ENCODE measurements at regions of chr20 and their contacts with region 1.

Region 1: GRCh38 chr20:44080646-44081267 is 106.2 kb downstream of the JPH2 start:
- DNase-seq: peak; percentile 53 to 72
- ATAC-seq: peak; percentile 73 to 81 (median 76)
- H3K4me3 ChIP-seq: no peak overlapping the region
- H3K27ac ChIP-seq: no peak overlapping the region
- H3K4me1 ChIP-seq: peaks cover 15% of the 10 kb centered on the region
- H3K27me3 ChIP-seq: no peaks in the 10 kb centered on the region
- CTCF ChIP-seq: peak; percentile 98

Region 2: GRCh38 chr20:43448748-43449535 is 631.8 kb before region 1 on chr20:
- intact Hi-C with region 1: loop called (anchors 5 to 10 kb)
- DNase-seq: no peak
- ATAC-seq: peak; percentile 48 to 81 (median 52)
- H3K4me3 ChIP-seq: no peak overlapping the region
- H3K27ac ChIP-seq: no peak overlapping the region
- H3K4me1 ChIP-seq: peaks cover 4% of the 10 kb centered on the region
- H3K27me3 ChIP-seq: peaks cover 0 to 5% (median 0%) of the 10 kb centered on the region in 3 donors
- CTCF ChIP-seq: peak; percentile 62

Region 3: GRCh38 chr20:43456809-43457639 is 623.7 kb before region 1 on chr20:
- intact Hi-C with region 1: loop called in 1 of 2 experiments (anchors 10 kb)
- DNase-seq: peak; percentile 85 to 91
- ATAC-seq: peak; percentile 84 to 92 (median 87)
- H3K4me3 ChIP-seq: peak overlapping the region; percentile 82
- H3K27ac ChIP-seq: peak overlapping the region; percentile 98
- H3K4me1 ChIP-seq: peaks cover 10% of the 10 kb centered on the region
- H3K27me3 ChIP-seq: no peaks in the 10 kb centered on the region
- CTCF ChIP-seq: no peak

Region 4: DNA sequence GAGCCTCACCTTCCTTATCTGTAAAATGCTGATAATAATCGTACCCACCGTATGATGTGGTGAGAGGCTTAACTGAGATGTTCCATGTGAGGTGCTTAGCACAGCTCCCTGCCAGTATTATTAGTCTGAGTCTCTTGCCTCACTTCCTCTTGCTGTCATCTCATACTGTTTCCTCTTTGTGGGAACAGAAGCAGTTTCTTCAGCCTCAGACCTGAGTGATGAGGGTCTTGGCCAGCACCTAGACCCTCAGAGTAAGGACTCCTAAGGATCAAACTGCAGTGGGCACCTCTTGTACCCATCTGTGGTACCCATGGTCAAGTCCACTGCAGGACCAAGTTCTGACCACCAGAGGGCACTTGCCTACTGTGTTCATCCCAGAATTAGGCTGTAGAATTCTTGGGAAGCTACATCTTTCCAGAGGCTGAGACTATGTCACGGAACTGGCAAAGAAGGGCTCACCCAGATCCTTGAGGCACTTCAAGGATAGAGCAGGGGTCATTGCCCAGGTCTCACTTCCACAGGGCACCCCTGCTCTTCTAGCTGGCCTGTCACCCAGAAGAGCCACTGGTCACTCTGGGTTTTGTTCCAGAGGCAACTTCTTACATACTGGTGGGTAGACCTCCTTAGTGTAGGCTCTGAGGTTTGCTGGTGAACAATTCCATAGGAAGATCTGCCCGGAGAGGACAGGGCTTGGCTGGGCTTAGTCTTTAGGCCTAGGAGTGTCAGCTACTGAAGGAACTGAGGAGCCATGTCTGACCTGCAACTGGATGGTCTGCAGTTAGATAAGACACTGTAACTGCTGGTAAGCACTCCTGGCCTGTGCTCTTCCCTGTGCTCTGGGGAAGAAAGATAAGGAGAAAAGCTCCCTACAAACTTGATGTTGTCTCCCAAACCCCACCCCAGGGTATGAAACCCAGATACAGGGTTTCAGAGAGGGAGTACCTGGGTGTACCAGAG is 542.6 kb before region 1 on chr20:
- intact Hi-C with region 1: loop called in 1 of 2 experiments (anchors 5 kb)
- DNase-seq: peak; percentile 56 to 70
- ATAC-seq: peak; percentile 46 to 67 (median 64)
- H3K4me3 ChIP-seq: no peak overlapping the region
- H3K27ac ChIP-seq: no peak overlapping the region
- H3K4me1 ChIP-seq: no peaks in the 10 kb centered on the region
- H3K27me3 ChIP-seq: no peaks in the 10 kb centered on the region
- CTCF ChIP-seq: peak; percentile 89

Region 5: DNA sequence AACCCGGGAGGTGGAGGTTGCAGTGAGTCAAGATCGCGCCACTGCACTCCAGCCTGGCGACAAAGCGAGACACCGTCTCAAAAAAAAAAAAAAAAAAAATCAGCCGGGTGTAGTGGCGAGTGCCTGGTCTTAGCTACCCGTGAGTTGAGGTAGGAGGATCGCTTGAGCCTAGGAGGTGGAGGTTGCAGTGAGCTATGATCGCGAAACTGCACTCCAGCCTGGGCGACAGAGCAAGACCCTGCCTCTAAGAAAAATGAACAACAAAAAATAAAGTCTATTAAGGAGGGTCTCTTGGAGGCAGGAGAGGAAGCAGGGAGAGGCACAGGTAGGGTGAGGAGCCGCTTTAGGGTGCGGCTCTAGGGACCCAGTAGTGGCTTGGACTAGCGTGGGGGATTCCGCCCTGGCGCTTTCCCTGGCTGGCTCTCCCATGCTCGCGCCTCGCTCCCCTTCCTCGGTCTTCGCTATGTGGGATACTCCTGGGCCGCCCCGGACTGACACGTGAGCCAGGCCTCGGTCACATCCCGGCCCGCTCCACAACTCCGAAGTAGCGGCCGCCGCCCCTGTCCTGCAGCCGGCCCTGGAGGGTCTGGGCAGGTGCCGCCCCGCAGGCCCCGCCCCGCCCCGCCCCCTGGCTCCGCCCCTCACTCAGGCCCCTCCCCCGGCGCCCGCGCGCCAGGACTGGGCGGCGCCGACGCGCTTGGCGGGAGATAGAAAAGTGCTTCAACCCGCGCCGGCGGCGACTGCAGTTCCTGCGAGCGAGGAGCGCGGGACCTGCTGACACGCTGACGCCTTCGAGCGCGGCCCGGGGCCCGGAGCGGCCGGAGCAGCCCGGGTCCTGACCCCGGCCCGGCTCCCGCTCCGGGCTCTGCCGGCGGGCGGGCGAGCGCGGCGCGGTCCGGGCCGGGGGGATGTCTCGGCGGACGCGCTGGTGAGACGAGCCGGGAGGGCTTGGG is 414.1 kb before region 1 on chr20 and contains the start of gene MYBL2:
- intact Hi-C with region 1: no loop called
- DNase-seq: peak; percentile 22 to 55
- ATAC-seq: peak in 3 of 4 donors; percentile 53 to 57 (median 56)
- H3K4me3 ChIP-seq: peak within 1 kb of the TSS; percentile 43
- H3K27ac ChIP-seq: no peak within 1 kb of the TSS
- H3K4me1 ChIP-seq: no peaks in the 10 kb centered on the region
- H3K27me3 ChIP-seq: peaks cover 5 to 62% (median 28%) of the 10 kb centered on the region in 3 donors
- CTCF ChIP-seq: no peak
- total RNA-seq, gene MYBL2: 0.17 TPM in 1 of 4 donors, not detected in the others

Region 6: DNA sequence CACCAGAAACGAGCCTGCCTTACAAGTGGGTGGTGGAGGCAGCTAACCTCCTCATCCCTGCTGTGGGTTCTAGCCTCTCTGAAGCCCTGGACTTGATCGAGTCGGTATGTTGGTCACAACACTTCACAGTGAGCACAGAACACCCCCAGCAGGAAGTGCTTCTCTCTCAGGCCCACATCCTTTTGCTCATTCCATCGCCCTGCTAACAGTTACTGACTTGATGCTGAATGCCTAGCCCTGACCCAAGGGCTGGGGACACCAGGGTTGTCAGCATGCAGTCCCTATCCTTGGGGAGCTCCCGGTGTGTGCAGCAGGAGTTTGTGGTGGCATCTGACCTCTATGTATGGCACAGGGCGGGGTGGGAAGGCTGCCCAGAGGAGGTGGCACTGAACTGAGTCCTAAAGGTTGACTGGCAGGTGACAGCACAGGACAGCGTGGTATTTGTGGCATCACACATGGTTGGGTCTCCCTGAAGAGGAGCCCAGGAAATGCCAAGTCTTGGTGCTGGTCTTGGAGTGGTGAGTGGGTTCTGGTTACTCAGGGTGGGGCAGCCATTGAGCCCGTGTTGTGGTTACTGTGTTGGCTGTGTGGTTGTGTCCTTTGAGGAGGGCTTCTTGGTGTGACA is 380.7 kb before region 1 on chr20:
- intact Hi-C with region 1: no loop called
- DNase-seq: no peak
- ATAC-seq: no peak
- H3K4me3 ChIP-seq: no peak overlapping the region
- H3K27ac ChIP-seq: no peak overlapping the region
- H3K4me1 ChIP-seq: no peaks in the 10 kb centered on the region
- H3K27me3 ChIP-seq: no peaks in the 10 kb centered on the region
- CTCF ChIP-seq: no peak

Region 7: GRCh38 chr20:43749734-43750294 is 330.9 kb before region 1 on chr20:
- intact Hi-C with region 1: loop called (anchors 1 to 5 kb)
- DNase-seq: peak; percentile 75 to 85
- ATAC-seq: peak; percentile 69 to 88 (median 83)
- H3K4me3 ChIP-seq: no peak overlapping the region
- H3K27ac ChIP-seq: no peak overlapping the region
- H3K4me1 ChIP-seq: no peaks in the 10 kb centered on the region
- H3K27me3 ChIP-seq: peaks cover 0 to 21% (median 4%) of the 10 kb centered on the region in 3 donors
- CTCF ChIP-seq: peak; percentile 99

Region 8: GRCh38 chr20:43824309-43825050 is 256.3 kb before region 1 on chr20:
- intact Hi-C with region 1: no loop called
- DNase-seq: no peak
- ATAC-seq: no peak
- H3K4me3 ChIP-seq: no peak overlapping the region
- H3K27ac ChIP-seq: no peak overlapping the region
- H3K4me1 ChIP-seq: no peaks in the 10 kb centered on the region
- H3K27me3 ChIP-seq: no peaks in the 10 kb centered on the region
- CTCF ChIP-seq: no peak

Region 9: GRCh38 chr20:43903953-43904826 is 176.6 kb before region 1 on chr20:
- intact Hi-C with region 1: no loop called
- DNase-seq: no peak
- ATAC-seq: no peak
- H3K4me3 ChIP-seq: no peak overlapping the region
- H3K27ac ChIP-seq: no peak overlapping the region
- H3K4me1 ChIP-seq: no peaks in the 10 kb centered on the region
- H3K27me3 ChIP-seq: peaks cover 0 to 2% (median 0%) of the 10 kb centered on the region in 3 donors
- CTCF ChIP-seq: no peak

Measured in psoas muscle (tissue), 8 donors.